ENCODE measurements at regions of chr18 and their contacts with region 1.

Region 1: GRCh38 chr18:10525371-10526210 is at the start of gene NAPG:
- DNase-seq: peak; percentile 91
- H3K4me3 Mint-ChIP-seq: peak within 1 kb of the TSS; percentile 97
- H3K27ac Mint-ChIP-seq: peak within 1 kb of the TSS; percentile 98
- H3K4me1 Mint-ChIP-seq: peaks cover 63% of the 10 kb centered on the region
- H3K27me3 Mint-ChIP-seq: peaks cover 7% of the 10 kb centered on the region
- total RNA-seq, gene NAPG: 37.4 and 40.3 TPM in 2 replicates

Region 2: DNA sequence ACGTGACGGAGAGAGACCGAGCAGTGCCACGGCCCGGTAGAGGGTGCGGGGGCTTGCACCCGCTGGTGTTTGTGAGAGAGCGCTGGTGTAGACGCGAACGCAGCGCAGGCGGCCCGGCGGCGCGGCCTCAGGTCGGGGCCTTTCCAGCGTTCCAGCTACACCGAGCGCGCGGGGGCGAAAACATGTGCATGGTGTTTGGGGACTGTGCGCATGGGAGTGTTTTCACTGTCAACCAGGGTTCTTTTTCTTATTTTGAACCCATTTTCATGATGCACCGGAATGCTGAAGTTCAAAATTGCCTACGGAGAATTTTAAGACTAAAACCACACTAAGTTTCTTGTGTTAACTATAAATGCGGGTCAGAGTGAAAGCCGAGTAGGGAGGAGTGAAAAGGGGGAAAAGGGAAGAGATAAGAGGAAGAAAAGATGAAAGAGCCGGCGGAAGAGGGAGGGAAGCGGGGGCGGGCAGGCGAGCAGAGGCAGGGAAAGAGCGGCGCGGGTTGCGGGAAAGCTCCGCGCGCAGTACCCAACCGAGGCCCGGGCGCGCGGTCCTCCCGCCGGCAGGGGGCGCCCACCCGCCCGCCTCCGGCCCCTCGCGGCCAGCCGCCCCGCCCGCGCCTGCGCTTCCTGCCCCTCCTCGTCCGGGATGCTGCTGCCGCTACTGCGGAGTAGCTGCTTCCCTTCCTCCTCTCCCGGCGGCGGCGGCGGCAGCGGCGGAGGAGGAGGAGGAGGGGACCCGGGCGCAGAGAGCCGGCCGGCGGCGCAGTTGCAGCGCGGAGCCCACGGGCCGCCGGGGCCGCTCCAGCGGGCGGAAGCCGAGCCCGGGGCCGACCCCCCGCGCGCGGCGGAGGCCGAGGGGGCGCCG is 1916.6 kb before region 1 on chr18 and contains the start of gene RAB12:
- intact Hi-C with region 1: loop called (anchors 5 kb)
- DNase-seq: peak; percentile 83
- H3K4me3 Mint-ChIP-seq: peak within 1 kb of the TSS; percentile 91
- H3K27ac Mint-ChIP-seq: peak within 1 kb of the TSS; percentile 88
- H3K4me1 Mint-ChIP-seq: peaks cover 50% of the 10 kb centered on the region
- H3K27me3 Mint-ChIP-seq: peaks cover 12% of the 10 kb centered on the region
- total RNA-seq, gene RAB12: 18.9 and 19.2 TPM in 2 replicates

Region 3: DNA sequence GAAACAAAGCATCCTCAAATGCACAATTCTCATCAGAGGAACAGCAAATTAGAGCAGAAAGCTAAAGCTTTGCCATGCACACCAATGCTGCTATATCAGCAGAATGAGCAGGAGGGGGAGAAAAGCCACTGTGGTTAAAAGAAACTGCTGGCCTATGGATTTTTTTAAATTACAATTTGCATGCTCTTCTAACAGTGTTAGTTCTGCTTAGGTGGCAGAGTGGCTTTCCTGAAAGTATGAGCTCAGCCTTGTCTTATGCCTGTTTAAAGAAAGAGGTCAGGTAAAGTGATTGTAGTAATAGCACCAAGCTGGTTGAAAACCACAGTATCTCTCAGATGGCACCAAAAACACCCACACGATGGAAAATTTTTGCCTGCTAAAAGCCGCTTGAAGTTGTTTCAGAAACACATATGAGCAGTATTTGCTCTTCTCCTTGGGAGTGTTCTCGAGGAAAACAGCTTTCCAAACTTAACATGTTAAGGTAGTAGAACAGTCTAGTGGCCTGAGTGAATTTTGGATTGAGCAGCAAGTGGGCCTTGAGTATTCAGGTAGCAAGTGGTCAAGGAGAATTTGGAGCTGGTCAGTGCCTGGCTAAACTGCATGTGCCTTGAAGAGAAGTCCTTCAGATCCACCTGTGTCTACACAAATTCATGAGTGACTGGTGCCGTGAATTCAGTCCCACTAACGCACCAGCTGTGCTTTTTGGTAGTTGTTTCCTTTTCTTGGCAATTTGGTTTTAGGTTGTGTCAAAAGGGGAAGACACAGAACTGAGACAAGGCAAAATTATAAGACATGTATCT is 1442.7 kb before region 1 on chr18:
- intact Hi-C with region 1: loop called (anchors 10 kb)
- DNase-seq: peak; percentile 51
- H3K4me3 Mint-ChIP-seq: peak overlapping the region; percentile 75
- H3K27ac Mint-ChIP-seq: peak overlapping the region; percentile 98
- H3K4me1 Mint-ChIP-seq: peaks cover 50% of the 10 kb centered on the region
- H3K27me3 Mint-ChIP-seq: no peaks in the 10 kb centered on the region

Region 4: GRCh38 chr18:10121786-10122542 is 403.6 kb before region 1 on chr18:
- intact Hi-C with region 1: loop called (anchors 10 kb)
- DNase-seq: no peak
- H3K4me3 Mint-ChIP-seq: no peak overlapping the region
- H3K27ac Mint-ChIP-seq: peak overlapping the region; percentile 55
- H3K4me1 Mint-ChIP-seq: peaks cover 25% of the 10 kb centered on the region
- H3K27me3 Mint-ChIP-seq: peaks cover 8% of the 10 kb centered on the region

Region 5: GRCh38 chr18:10213526-10213925 is 312.1 kb before region 1 on chr18:
- intact Hi-C with region 1: loop called (anchors 10 kb)
- DNase-seq: peak; percentile 21
- H3K4me3 Mint-ChIP-seq: no peak overlapping the region
- H3K27ac Mint-ChIP-seq: no peak overlapping the region
- H3K4me1 Mint-ChIP-seq: peaks cover 13% of the 10 kb centered on the region
- H3K27me3 Mint-ChIP-seq: peaks cover 7% of the 10 kb centered on the region

Region 6: GRCh38 chr18:10499230-10499629 is 26.4 kb before region 1 on chr18:
- intact Hi-C with region 1: loop called (anchors 1 kb)
- DNase-seq: no peak
- H3K4me3 Mint-ChIP-seq: no peak overlapping the region
- H3K27ac Mint-ChIP-seq: no peak overlapping the region
- H3K4me1 Mint-ChIP-seq: peaks cover 9% of the 10 kb centered on the region
- H3K27me3 Mint-ChIP-seq: peaks cover 12% of the 10 kb centered on the region

Region 7: DNA sequence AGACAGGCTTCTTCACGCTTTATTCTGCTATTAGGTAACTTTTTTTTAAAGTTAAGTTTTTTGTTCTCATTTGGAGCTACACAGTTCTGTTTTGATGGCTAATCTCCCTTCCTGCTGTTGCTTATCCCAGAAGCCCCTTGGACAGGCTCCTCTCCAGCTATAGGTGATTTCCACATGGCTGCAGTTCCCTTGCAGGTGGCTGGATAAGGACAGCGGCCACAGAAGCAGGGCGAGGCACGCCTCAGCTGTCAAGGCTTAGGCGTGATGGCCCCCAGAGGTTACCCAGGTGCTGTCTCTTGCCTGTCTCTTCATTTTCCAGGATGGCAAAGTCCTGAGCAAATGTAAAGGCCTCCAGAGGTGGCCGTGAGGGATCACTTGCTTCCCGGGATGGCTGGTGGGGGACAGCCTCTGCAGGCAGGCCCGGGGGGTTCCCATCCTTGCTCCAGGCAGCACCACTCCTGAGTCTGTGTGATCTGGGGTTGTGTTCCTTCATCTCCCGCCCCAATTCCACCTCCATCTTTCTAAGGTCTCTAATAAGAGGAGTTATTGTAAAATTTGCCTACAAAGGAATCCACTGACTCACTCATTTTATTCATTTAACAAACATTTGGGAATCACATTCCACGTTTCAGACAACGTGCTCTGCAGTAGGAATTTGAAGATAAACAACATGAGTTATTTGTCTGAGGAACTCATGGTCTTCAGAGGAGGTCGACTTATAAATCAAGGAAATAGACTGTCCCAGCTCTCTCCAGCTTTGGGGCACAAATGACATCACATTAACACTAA is 53.7 kb after region 1 on chr18:
- intact Hi-C with region 1: no loop called
- DNase-seq: no peak
- H3K4me3 Mint-ChIP-seq: no peak overlapping the region
- H3K27ac Mint-ChIP-seq: no peak overlapping the region
- H3K4me1 Mint-ChIP-seq: peaks cover 11% of the 10 kb centered on the region
- H3K27me3 Mint-ChIP-seq: no peaks in the 10 kb centered on the region

Measured in activated T-helper 1 cell treated with anti-CD3 and anti-CD28 coated beads, Interleukin-12 subunit alpha, Interleukin-12 subunit beta, Interleukin-2, Interleukin-4 antibody, amounts not matched to agents 30 ng/mL and 10 ng/mL and 1 ng/mL, durations not matched to agents 14 hours and 24 hours and 36 hours (primary cell).